Heart left ventricle (tissue), 16 donors: ENCODE measurements at regions of chr9 and their contacts with region 1.

Region 1: GRCh38 chr9:131762356-131762932 is 22.6 kb upstream of the RAPGEF1 start:
- DNase-seq: peak; percentile 65 to 89 (median 74)
- ATAC-seq: peak; percentile 59 to 93 (median 92)
- H3K4me3 ChIP-seq: no peak overlapping the region
- H3K27ac ChIP-seq: no peak overlapping the region
- H3K4me1 ChIP-seq: peaks cover 0 to 8% (median 5%) of the 10 kb centered on the region in 12 donors
- H3K27me3 ChIP-seq: peaks cover 0 to 15% (median 0%) of the 10 kb centered on the region in 9 donors
- CTCF ChIP-seq: peak; percentile 86 to 98 (median 95)
- POLR2A ChIP-seq: no peak

Region 2: DNA sequence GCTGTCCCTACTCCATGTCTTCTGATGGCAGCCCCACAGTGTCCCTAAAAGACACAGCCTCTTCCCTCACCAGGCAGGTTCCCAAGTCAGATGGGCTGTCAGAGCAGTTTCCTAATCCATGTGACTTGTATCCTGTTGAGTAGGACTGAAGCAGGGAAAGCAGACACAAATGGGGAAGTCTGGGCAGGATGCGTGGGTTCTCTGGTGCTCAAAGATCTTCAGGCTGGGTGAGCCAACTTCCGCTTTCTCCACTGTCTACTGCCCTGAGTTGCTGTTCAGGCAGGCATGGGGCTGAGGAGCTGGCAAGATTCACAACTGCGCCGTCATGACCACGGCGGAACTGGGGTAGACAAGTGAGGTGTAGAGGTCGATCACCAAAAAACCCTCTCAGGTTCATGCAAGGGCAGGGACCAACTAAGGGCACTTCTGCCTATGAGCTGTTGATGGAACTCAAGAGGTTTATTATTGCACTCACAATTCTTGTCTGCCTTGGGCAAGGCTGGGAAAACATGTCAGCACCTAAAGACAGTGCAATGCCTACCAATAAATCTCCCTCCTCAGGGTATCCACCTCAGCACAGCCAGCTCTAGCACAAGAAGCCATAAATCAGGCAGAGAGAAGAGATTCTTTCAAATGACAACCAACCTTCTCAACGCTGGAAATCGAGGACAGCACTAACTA is 105.9 kb before region 1 on chr9:
- intact Hi-C with region 1: no loop called
- DNase-seq: peak; percentile 74 to 84 (median 79)
- ATAC-seq: peak; percentile 51 to 86 (median 69)
- H3K4me3 ChIP-seq: no peak overlapping the region
- H3K27ac ChIP-seq: peak overlapping the region in 9 of 12 donors; percentile 23 to 88 (median 36)
- H3K4me1 ChIP-seq: peaks cover 18 to 89% (median 67%) of the 10 kb centered on the region in 12 donors
- H3K27me3 ChIP-seq: no peaks in the 10 kb centered on the region
- CTCF ChIP-seq: no peak
- POLR2A ChIP-seq: no peak

Region 3: DNA sequence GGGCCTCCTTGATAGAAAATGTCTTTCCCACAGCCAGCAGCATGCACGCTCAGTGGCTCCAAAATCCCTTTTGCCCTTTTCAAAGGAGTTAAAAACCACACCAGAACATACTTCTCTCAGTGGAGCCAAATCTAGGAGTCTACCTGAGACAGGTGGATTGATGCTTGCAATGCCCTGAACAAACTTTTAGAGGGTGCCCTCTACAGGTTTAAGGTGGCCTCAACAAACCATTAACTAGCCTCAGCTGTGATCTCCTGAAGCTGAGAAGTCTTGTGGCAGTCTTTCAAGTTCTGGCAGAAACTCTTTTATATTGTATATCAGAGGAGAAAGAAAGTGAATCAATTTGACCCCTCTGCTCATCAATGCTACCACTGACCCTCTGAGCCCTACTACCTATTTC is 191.9 kb after region 1 on chr9:
- intact Hi-C with region 1: loop called in 1 of 10 experiments (anchors 10 kb)
- DNase-seq: no peak
- ATAC-seq: no peak
- H3K4me3 ChIP-seq: no peak overlapping the region
- H3K27ac ChIP-seq: no peak overlapping the region
- H3K4me1 ChIP-seq: peaks cover 0 to 20% (median 13%) of the 10 kb centered on the region in 12 donors
- H3K27me3 ChIP-seq: no peaks in the 10 kb centered on the region
- CTCF ChIP-seq: peak in 3 of 12 donors; percentile 9 to 26 (median 12)
- POLR2A ChIP-seq: no peak

Region 4: GRCh38 chr9:132079391-132080091 is 317.1 kb after region 1 on chr9 and contains the start of gene MED27:
- intact Hi-C with region 1: loop called in 1 of 10 experiments (anchors 10 kb)
- DNase-seq: peak; percentile 91 to 95 (median 93)
- ATAC-seq: peak; percentile 92 to 99 (median 98)
- H3K4me3 ChIP-seq: peak within 1 kb of the TSS; percentile 40 to 96 (median 76)
- H3K27ac ChIP-seq: peak within 1 kb of the TSS; percentile 1 to 80 (median 68)
- H3K4me1 ChIP-seq: peaks cover 0 to 30% (median 17%) of the 10 kb centered on the region in 12 donors
- H3K27me3 ChIP-seq: no peaks in the 10 kb centered on the region
- CTCF ChIP-seq: no peak
- POLR2A ChIP-seq: no peak
- total RNA-seq, gene MED27: 14.3 to 20.5 (median 15.6) TPM

Region 5: DNA sequence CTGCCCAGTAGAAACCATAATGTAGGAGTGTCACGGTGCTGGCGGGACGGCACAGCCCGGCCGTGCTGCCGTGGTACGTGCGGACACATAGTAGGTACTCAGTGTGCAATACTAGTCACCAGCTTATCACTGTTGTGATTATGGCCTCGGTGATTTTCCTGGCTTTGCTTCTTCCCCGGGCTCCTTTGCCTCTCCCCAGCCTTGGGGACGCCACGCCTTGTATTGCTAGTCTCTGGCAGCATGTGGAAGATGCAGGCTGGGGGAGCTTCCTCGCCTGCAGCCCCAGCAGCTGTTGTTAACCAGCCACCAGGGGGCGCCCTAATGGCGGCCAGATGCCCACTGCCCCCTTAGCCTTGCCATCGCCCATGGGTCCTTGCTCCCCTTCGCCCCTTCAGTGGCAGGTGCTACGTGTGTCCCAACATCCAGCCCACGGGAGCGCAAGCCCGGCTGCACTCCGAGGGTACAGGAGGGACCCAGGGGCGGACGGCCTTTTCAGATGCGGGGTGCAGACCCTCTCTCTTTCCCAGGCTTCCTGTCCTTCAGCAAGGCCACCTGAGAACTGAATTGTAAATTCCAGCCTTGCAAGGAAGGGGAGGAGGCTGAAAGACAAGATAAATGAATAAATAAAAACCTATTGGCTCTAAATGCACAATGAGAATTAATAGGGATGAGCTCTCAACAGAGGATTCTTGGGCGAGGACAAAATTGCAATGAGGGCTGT is 407.4 kb after region 1 on chr9:
- intact Hi-C with region 1: loop called in 3 of 10 experiments (anchors 5 to 10 kb)
- DNase-seq: peak; percentile 32 to 80 (median 64)
- ATAC-seq: peak; percentile 49 to 71 (median 64)
- H3K4me3 ChIP-seq: no peak overlapping the region
- H3K27ac ChIP-seq: no peak overlapping the region
- H3K4me1 ChIP-seq: peaks cover 0 to 6% (median 4%) of the 10 kb centered on the region in 12 donors
- H3K27me3 ChIP-seq: peaks cover 1 to 29% (median 10%) of the 10 kb centered on the region in 9 donors
- CTCF ChIP-seq: peak; percentile 67 to 89 (median 81)
- POLR2A ChIP-seq: no peak

Region 6: DNA sequence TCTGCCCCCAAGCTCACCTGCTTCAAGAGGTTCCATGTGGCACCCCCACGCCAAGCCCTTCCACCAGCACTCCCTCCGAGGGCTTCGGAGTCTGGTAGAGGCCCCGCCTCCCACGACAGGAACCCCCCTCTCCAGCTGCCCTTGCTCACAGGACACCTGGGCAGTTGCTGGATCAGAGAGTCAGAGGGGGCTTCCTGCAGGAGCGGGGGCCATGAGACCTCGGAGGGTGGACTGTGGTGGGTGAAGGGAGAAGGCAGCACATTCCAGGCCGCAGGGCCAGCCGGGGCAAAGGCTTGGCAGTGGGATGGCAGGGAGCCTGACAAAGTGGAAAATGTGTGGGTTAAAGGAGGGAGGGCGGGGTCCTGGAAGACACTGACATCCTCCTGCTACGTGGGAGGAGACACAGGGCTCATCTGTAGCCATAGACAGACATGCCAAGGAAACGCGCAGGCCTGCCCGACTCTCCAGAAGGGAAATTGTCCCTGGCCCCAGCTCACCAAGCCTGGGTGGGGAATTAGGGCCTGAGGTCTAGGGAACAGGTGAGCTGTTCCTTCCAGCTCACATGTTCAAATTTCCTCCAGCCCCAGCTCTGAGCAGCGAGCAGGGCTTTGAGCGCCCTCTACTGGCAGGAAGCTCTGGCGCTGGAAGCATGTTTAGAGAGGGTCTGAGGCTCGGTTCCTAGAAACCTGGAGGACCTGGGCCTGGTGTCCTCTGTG is 473.7 kb after region 1 on chr9:
- intact Hi-C with region 1: loop called in 7 of 10 experiments (anchors 1 to 5 kb)
- DNase-seq: peak; percentile 63 to 87 (median 77)
- ATAC-seq: peak; percentile 7 to 46 (median 24)
- H3K4me3 ChIP-seq: no peak overlapping the region
- H3K27ac ChIP-seq: no peak overlapping the region
- H3K4me1 ChIP-seq: peaks cover 0 to 30% (median 6%) of the 10 kb centered on the region in 12 donors
- H3K27me3 ChIP-seq: peaks cover 0 to 15% (median 0%) of the 10 kb centered on the region in 9 donors
- CTCF ChIP-seq: peak; percentile 88 to 98 (median 94)
- POLR2A ChIP-seq: no peak

Region 7: DNA sequence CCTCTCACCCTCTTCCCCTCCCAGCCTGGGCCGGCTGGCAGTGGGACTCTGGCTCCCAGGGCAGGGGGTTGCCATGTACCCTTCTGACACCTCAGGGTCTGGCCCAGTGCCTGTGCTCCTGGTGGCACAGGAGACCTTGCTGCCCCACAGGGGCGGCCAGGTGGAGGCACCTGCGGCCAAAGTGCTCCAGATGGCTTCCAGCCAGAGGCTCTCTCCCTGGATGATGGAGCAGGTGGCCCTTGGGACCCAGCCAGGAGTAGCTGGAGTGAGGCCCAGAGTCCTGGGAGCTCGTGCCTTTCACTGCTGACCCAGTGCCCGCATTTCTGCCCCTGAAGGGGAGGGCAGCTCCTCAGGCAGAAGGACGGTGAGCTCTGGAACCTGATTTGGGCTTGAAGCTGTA is 486.7 kb after region 1 on chr9:
- intact Hi-C with region 1: loop called in 8 of 10 experiments (anchors 1 to 5 kb)
- DNase-seq: peak in 1 of 5 donors; percentile 64
- ATAC-seq: peak in 2 of 4 donors; percentile 25 to 61
- H3K4me3 ChIP-seq: no peak overlapping the region
- H3K27ac ChIP-seq: no peak overlapping the region
- H3K4me1 ChIP-seq: peaks cover 0 to 16% (median 1%) of the 10 kb centered on the region in 12 donors
- H3K27me3 ChIP-seq: peaks cover 0 to 14% (median 0%) of the 10 kb centered on the region in 9 donors
- CTCF ChIP-seq: no peak
- POLR2A ChIP-seq: no peak

Region 8: GRCh38 chr9:132268725-132269352 is 506.4 kb after region 1 on chr9:
- intact Hi-C with region 1: loop called in 9 of 10 experiments (anchors 1 to 10 kb)
- DNase-seq: peak in 4 of 5 donors; percentile 55 to 73 (median 62)
- ATAC-seq: peak in 3 of 4 donors; percentile 50 to 64 (median 53)
- H3K4me3 ChIP-seq: no peak overlapping the region
- H3K27ac ChIP-seq: peak overlapping the region in 8 of 12 donors; percentile 1 to 57 (median 24)
- H3K4me1 ChIP-seq: peaks cover 0 to 29% (median 10%) of the 10 kb centered on the region in 12 donors
- H3K27me3 ChIP-seq: no peaks in the 10 kb centered on the region
- CTCF ChIP-seq: peak; percentile 76 to 98 (median 88)
- POLR2A ChIP-seq: no peak